Common myeloid progenitor, CD34-positive (primary cell): ENCODE measurements at regions of chr3 and their contacts with region 1.

Region 1: DNA sequence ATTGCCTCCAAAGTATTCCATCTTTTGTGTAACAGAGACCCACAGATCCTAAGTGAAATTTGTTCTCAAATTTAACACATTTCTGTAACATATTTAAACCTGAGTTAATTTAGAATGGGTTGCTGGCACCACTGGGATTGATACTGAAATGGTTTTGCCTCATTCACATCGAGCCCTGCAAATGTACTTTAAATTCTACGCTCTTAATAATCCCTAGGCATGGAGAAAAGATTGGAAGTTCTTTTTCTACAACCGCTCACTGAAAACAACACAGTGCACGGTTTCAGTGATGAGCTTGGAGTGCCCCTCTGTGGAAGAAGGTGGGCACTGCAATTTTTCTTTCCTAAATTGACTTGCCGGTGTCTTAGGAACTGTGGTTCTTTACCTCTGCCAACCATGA is 109.9 kb upstream of the ATP11B start:
- DNase-seq: peak; percentile 64 to 78 (median 72)
- H3K4me3 ChIP-seq: peak overlapping the region in 1 of 7 experiments; percentile 77
- H3K27ac ChIP-seq: no peak overlapping the region
- H3K4me1 ChIP-seq: peaks cover 2 to 13% (median 12%) of the 10 kb centered on the region in 4 experiments
- H3K27me3 ChIP-seq: peaks cover 9 to 73% (median 23%) of the 10 kb centered on the region in 5 experiments

Region 2: DNA sequence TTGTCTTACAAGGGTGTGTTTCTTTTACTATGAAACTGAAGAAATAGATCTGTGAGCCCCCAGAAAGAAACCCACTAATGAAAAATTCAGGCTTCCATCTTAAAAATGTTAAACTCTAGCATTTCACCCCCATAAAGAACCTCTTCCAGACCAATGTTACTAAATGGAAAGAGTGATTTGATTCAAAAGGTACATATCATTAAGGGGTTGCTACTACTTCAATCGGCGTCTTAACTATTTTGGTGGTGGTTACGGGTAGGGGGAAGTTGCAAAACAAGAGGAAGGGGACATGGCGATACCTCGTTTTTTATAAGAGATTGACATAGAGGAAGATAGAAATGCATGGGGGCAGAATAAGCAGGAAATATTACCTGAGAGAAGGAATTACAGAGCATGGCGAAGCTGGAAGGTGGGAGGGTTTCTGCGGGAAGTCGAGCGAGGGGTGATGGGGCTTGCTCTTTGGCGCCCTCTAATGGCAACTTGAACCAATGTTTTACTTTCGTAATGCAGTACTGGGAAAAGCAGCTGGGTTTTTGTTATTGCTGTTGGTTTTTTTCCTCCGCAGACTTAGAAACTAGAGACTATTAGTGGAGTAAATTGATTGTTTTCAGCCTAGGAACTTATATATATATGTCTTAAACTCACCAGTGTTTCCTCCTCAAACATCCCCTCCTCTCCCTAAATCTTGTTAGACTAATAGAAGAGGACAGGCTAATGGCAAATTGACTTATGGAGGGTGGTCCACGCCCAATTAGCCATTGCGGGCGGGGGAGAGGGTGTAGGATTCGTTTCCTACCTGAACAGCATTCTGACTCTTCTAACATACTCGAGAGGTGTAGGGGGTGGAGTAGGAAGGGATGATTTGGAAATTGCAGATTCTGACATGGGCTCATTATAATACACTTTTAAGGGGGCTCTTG is 983.0 kb before region 1 on chr3:
- CTCF ChIA-PET with region 1: interaction called, 10 read pairs
- POLR2A ChIA-PET with region 1: no interaction called
- DNase-seq: peak; percentile 84 to 90 (median 86)
- H3K4me3 ChIP-seq: peak overlapping the region in 5 of 7 experiments; percentile 20 to 69 (median 51)
- H3K27ac ChIP-seq: no peak overlapping the region
- H3K4me1 ChIP-seq: peaks cover 0 to 25% (median 16%) of the 10 kb centered on the region in 4 experiments
- H3K27me3 ChIP-seq: peaks cover 39 to 99% (median 66%) of the 10 kb centered on the region in 5 experiments

Region 3: GRCh38 chr3:181709537-181710279 is 973.7 kb before region 1 on chr3:
- CTCF ChIA-PET with region 1: interaction called, 30 read pairs
- POLR2A ChIA-PET with region 1: no interaction called
- DNase-seq: peak; percentile 69 to 78 (median 71)
- H3K4me3 ChIP-seq: peak overlapping the region in 1 of 7 experiments; percentile 8
- H3K27ac ChIP-seq: no peak overlapping the region
- H3K4me1 ChIP-seq: peaks cover 0 to 13% (median 4%) of the 10 kb centered on the region in 4 experiments
- H3K27me3 ChIP-seq: peaks cover 35 to 97% (median 60%) of the 10 kb centered on the region in 5 experiments